BJ (cell line): ENCODE measurements at regions of chr12 and their contacts with region 1.

Region 1: GRCh38 chr12:94012590-94012989 is 135.8 kb upstream of the PLXNC1 start:
- DNase-seq: no peak
- H3K4me3 ChIP-seq: no peak overlapping the region
- H3K27me3 ChIP-seq: no peaks in the 10 kb centered on the region
- CTCF ChIP-seq: no peak

Region 2: GRCh38 chr12:93990832-93991803 is 21.5 kb before region 1 on chr12:
- CTCF ChIA-PET with region 1: interaction called, 11 read pairs
- POLR2A ChIA-PET with region 1: no interaction called
- DNase-seq: no peak
- H3K4me3 ChIP-seq: no peak overlapping the region
- H3K27me3 ChIP-seq: no peaks in the 10 kb centered on the region
- CTCF ChIP-seq: peak; percentile 65